Activated B cell treated with CpG ODN at 0.5 μM for 24 hours (primary cell): ENCODE measurements at regions of chr18 and their contacts with region 1.

Region 1: GRCh38 chr18:22933206-22933957 is at the start of gene RBBP8:
- DNase-seq: peak; percentile 92
- ATAC-seq: peak; percentile 85
- H3K4me3 Mint-ChIP-seq: peak within 1 kb of the TSS; percentile 94
- H3K27ac Mint-ChIP-seq: peak within 1 kb of the TSS; percentile 96
- H3K4me1 Mint-ChIP-seq: peaks cover 28% of the 10 kb centered on the region
- H3K27me3 Mint-ChIP-seq: no peaks in the 10 kb centered on the region
- CTCF ChIP-seq: no peak
- total RNA-seq, gene RBBP8: 29.1 and 29.3 TPM in 2 replicates

Region 2: GRCh38 chr18:21600526-21601410 is 1332.6 kb before region 1 on chr18 and contains the start of gene ESCO1:
- CTCF ChIA-PET with region 1: no interaction called
- POLR2A ChIA-PET with region 1: no interaction called
- intact Hi-C with region 1: loop called (anchors 2 kb)
- DNase-seq: peak; percentile 88
- ATAC-seq: peak; percentile 80
- H3K4me3 Mint-ChIP-seq: peak within 1 kb of the TSS; percentile 96
- H3K27ac Mint-ChIP-seq: peak within 1 kb of the TSS; percentile 99
- H3K4me1 Mint-ChIP-seq: peaks cover 50% of the 10 kb centered on the region
- H3K27me3 Mint-ChIP-seq: no peaks in the 10 kb centered on the region
- CTCF ChIP-seq: peak; percentile 78
- total RNA-seq, gene ESCO1: 18.2 and 19.6 TPM in 2 replicates

Region 3: GRCh38 chr18:22846088-22846683 is 87.2 kb before region 1 on chr18:
- CTCF ChIA-PET with region 1: no interaction called
- POLR2A ChIA-PET with region 1: no interaction called
- intact Hi-C with region 1: no loop called
- DNase-seq: no peak
- ATAC-seq: no peak
- H3K4me3 Mint-ChIP-seq: no peak overlapping the region
- H3K27ac Mint-ChIP-seq: no peak overlapping the region
- H3K4me1 Mint-ChIP-seq: no peaks in the 10 kb centered on the region
- H3K27me3 Mint-ChIP-seq: no peaks in the 10 kb centered on the region
- CTCF ChIP-seq: no peak

Region 4: GRCh38 chr18:22977847-22978701 is 44.7 kb after region 1 on chr18:
- CTCF ChIA-PET with region 1: interaction called, 63 read pairs
- POLR2A ChIA-PET with region 1: interaction called, 9 read pairs
- intact Hi-C with region 1: loop called (anchors 1 kb)
- DNase-seq: no peak
- ATAC-seq: peak; percentile 73
- H3K4me3 Mint-ChIP-seq: peak overlapping the region; percentile 62
- H3K27ac Mint-ChIP-seq: peak overlapping the region; percentile 79
- H3K4me1 Mint-ChIP-seq: peaks cover 47% of the 10 kb centered on the region
- H3K27me3 Mint-ChIP-seq: no peaks in the 10 kb centered on the region
- CTCF ChIP-seq: no peak

Region 5: DNA sequence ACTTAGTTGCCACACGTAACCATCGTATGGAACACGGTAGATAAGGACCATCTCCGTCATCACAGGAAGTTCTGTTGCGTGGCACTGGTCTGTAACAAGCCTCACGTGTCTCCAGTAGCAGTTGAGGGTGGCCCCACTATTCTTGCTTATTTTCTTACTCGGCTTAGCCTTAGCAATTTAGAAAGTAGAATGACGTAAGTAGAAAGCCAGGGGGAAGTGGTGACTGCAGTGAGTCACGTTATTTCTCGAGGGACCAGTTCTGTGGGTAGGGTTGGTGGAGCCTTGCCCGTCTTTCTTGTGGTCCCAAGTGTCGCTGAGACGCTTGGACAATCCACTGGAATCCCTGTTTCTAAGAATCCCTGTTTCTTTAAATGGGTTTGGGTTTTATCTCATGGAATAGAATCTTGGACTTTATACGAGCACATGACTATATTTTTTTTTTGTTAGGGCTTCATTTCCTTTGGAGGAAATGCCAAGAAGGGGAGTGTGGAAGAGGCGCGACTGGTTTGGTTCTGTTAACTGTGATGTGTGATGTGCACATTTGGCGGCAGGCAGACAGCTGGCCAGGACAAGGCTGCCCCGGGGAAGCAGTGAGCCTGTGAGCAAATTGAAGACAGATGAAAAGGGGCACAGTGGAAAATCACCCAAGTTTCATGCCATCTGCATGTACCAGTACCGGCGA is 298.1 kb after region 1 on chr18:
- CTCF ChIA-PET with region 1: interaction called, 5 read pairs
- POLR2A ChIA-PET with region 1: no interaction called
- intact Hi-C with region 1: loop called (anchors 1 kb)
- DNase-seq: peak; percentile 58
- ATAC-seq: peak; percentile 75
- H3K4me3 Mint-ChIP-seq: peak overlapping the region; percentile 76
- H3K27ac Mint-ChIP-seq: peak overlapping the region; percentile 97
- H3K4me1 Mint-ChIP-seq: peaks cover 74% of the 10 kb centered on the region
- H3K27me3 Mint-ChIP-seq: no peaks in the 10 kb centered on the region
- CTCF ChIP-seq: no peak

Region 6: DNA sequence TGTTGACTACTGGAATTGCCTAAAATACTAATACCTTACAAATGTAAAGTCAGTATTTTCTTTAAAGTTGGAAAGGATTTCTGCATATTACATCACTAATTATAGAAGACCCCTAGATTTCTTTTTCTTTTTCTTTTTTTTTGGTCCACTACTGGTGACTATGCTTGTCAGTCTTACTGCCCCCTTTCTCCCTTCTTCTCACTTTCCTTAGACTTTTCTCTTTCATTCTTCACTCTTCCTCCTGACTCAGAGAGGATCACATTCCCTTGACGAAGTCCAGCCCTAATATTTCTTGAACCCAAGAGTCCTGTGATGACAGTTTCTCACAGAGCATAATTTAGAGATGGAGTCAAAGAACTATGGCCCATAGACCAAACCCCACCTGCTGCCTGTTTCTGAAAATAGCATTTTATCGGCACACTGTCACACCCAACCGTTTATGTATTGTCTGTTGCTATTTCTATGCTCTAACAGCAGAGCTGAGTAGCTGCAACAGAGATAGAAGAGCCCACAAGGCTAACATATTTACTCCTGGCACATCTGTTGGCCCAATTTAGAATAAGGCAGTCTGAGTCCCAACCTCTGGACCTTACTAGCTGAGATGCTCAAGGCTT is 479.1 kb after region 1 on chr18:
- CTCF ChIA-PET with region 1: interaction called, 15 read pairs
- POLR2A ChIA-PET with region 1: interaction called, 6 read pairs
- intact Hi-C with region 1: loop called (anchors 1 kb)
- DNase-seq: no peak
- ATAC-seq: no peak
- H3K4me3 Mint-ChIP-seq: no peak overlapping the region
- H3K27ac Mint-ChIP-seq: no peak overlapping the region
- H3K4me1 Mint-ChIP-seq: peaks cover 7% of the 10 kb centered on the region
- H3K27me3 Mint-ChIP-seq: no peaks in the 10 kb centered on the region
- CTCF ChIP-seq: no peak

Region 7: DNA sequence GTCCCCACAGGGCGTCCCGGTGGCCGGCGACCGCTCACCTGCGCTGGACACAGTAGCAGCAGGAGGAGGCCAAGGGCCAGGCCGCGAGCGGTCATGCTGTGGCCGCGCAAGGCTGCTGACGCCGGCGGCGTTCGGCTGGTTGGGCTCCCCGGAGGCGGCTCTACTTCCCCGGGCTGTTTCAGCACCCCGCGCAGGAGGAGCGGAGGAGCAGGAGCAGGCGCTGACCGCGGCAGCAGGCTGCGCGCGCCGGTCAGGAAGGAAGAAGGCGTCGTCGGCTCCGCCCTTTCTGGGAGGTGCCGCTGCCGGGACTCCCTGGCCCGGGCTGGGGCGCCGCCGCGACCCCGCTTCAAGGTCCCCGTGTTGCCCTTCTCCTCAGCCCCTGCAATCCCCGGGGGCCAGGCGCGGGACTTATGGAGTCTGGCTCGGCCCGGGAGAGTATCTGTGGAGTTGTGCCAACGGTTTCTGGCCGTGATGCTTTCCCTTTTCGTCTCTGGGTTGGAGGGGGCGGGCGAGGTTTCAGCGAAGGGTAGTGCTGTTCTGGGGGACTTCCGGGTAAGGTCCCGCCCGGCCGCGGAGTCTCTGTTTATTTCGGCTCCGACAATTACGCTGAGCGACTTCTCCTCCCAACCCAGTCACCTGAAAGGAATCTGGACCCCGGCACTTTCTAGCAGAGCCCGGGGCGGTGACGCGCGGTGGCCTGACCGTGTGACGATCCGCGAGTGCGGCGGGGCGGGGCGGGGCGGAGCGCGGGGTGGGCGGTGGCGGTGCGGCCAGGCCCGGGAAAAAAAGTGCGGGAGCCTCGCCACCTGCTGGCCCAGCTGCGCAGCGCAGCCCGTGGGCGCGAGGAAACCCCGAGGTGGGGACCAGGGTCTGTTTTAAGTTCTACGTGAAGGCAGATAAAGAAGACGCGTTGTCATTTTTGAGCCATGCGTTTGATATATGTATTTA is 653.1 kb after region 1 on chr18 and contains the start of gene NPC1:
- CTCF ChIA-PET with region 1: no interaction called
- POLR2A ChIA-PET with region 1: no interaction called
- intact Hi-C with region 1: loop called (anchors 2 kb)
- DNase-seq: peak; percentile 94
- ATAC-seq: peak; percentile 88
- H3K4me3 Mint-ChIP-seq: peak within 1 kb of the TSS; percentile 91
- H3K27ac Mint-ChIP-seq: peak within 1 kb of the TSS; percentile 95
- H3K4me1 Mint-ChIP-seq: peaks cover 31% of the 10 kb centered on the region
- H3K27me3 Mint-ChIP-seq: no peaks in the 10 kb centered on the region
- CTCF ChIP-seq: peak; percentile 39
- total RNA-seq, gene NPC1: 31.9 and 36.5 TPM in 2 replicates